ENCODE measurements at regions of chr4 and their contacts with region 1.

Region 1: DNA sequence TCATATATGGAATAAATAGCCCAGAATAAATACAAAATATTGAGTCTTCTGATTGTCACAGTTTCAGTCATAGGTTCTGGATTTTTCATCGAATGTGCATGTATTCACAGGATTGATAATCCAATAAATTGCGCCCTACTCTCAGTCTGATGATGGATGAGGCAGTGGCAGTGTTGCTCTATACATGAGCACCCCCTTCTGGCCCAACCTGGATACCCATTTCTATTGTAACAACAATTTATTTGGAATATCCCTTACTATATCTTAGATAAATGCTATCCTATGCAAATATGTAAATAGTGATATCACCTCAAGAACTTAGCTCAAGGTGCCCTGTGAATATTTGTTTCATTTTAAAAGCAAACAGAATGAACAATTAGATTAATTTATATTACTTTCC is 733.7 kb upstream of the PABPC4L start:
- DNase-seq: peak; percentile 17
- ATAC-seq: no peak
- H3K4me3 Mint-ChIP-seq: no peak overlapping the region
- H3K27ac Mint-ChIP-seq: no peak overlapping the region
- H3K4me1 Mint-ChIP-seq: no peaks in the 10 kb centered on the region
- H3K27me3 Mint-ChIP-seq: no peaks in the 10 kb centered on the region

Region 2: GRCh38 chr4:133148690-133149363 is 1786.5 kb before region 1 on chr4 and contains the start of gene PCDH10:
- CTCF ChIA-PET with region 1: no interaction called
- POLR2A ChIA-PET with region 1: no interaction called
- intact Hi-C with region 1: loop called in 1 of 2 experiments (anchors 5 kb)
- DNase-seq: peak; percentile 81
- ATAC-seq: peak; percentile 93
- H3K4me3 Mint-ChIP-seq: peak within 1 kb of the TSS; percentile 65
- H3K27ac Mint-ChIP-seq: no peak within 1 kb of the TSS
- H3K4me1 Mint-ChIP-seq: peaks cover 27% of the 10 kb centered on the region
- H3K27me3 Mint-ChIP-seq: peaks cover 72% of the 10 kb centered on the region
- total RNA-seq, gene PCDH10: not detected

Region 3: DNA sequence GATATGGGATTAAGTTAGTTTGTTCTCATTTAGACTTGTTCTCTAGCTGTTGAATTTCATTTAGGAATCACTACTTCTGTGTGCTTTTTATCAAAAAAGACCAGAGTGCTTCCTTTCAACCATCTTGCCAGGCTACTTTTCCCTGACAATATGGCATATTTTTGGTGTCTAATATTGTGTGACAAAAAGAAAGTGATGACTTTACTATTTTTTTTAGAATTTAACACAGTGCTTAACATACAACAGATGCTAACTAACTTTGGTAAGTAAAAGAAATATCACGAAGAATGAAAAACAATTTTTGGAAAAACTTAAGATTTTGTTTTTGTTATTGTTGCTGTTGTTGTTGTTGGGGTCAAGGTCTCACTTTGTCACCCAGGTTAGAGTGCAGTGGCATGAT is 271.6 kb before region 1 on chr4:
- CTCF ChIA-PET with region 1: no interaction called
- POLR2A ChIA-PET with region 1: no interaction called
- intact Hi-C with region 1: no loop called
- DNase-seq: no peak
- ATAC-seq: no peak
- H3K4me3 Mint-ChIP-seq: no peak overlapping the region
- H3K27ac Mint-ChIP-seq: no peak overlapping the region
- H3K4me1 Mint-ChIP-seq: no peaks in the 10 kb centered on the region
- H3K27me3 Mint-ChIP-seq: no peaks in the 10 kb centered on the region

Measured in activated CD4-positive, alpha-beta T cell treated with anti-CD3 and anti-CD28 coated beads for 36 hours (primary cell).